Dendritic cell treated with granulocyte-macrophage colony-stimulating factor and Interleukin-4, amounts not matched to agents 40 ng/mL and 50 ng/mL, for 4 days (primary cell): ENCODE measurements at regions of chr4 and their contacts with region 1.

Region 1: DNA sequence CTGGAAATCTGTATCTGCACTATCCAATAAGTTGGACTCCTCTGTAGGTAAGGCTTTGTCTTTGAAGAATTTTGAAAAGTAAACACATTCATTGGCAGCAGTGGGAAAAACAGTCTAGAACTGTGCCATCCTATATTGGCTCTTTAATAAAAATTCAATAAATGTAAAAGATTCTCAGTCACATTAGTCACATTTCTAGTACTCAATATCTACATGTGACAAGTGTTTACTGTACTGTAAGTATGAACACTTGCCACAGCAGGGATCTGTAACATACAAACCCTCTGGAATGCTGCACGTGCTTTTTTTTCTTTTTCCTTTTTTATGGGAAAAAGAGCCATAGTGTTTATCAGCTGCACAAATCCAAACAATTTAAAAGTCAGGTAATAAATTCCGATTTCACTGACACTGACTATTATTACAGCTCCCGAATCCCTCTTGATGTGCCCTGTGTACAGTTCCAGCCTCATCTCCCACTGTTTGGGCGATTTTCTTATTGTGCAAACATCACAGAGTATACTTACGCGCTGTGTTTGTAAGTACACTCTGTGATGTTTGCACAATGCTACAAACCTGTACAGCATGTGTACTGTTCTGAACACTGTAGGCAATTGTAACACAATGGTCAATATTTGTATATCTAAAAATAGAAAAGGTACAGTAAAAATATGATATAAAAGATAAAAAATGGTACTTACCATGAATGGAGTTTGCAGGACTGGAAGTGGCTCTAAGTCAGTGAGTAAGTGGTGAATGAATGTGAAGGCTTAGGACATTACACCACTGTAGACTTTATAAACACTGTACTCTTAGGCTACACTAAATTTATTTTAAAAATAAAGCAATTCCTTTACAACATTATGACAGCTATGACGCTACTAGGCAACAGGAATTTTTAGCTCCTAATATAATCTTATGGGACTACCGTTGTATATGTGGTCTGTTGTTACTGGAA is 8.7 kb downstream of the PYURF start:
- H3K4me3 Mint-ChIP-seq: no peak overlapping the region
- H3K27ac Mint-ChIP-seq: no peak overlapping the region
- H3K4me1 Mint-ChIP-seq: no peaks in the 10 kb centered on the region
- H3K27me3 Mint-ChIP-seq: no peaks in the 10 kb centered on the region

Region 2: DNA sequence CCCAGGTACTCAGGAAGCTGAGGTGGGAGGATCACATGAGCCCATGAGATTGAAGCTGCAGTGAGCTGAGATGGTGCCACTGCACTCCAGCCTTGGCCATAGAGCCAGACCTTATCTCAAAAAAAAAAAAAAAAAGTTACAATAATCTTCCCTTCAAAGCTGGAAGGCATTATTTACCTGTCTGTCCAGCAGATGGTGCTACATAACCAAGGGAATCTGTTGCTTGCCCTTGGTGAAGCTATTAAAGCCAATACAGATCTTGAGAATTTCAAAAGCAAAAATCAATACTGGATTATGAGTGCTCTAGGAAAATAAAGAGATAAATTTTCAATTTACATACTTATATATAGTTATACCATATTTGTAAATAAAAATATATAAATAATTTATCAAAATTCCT is 481.5 kb before region 1 on chr4:
- intact Hi-C with region 1: loop called (anchors 10 kb)
- H3K4me3 Mint-ChIP-seq: no peak overlapping the region
- H3K27ac Mint-ChIP-seq: no peak overlapping the region
- H3K4me1 Mint-ChIP-seq: peaks cover 35% of the 10 kb centered on the region
- H3K27me3 Mint-ChIP-seq: no peaks in the 10 kb centered on the region

Region 3: GRCh38 chr4:88366460-88366859 is 148.4 kb before region 1 on chr4:
- intact Hi-C with region 1: loop called (anchors 2 kb)
- H3K4me3 Mint-ChIP-seq: no peak overlapping the region
- H3K27ac Mint-ChIP-seq: no peak overlapping the region
- H3K4me1 Mint-ChIP-seq: peaks cover 6% of the 10 kb centered on the region
- H3K27me3 Mint-ChIP-seq: no peaks in the 10 kb centered on the region

Region 4: GRCh38 chr4:88456757-88457306 is 58.0 kb before region 1 on chr4 and contains the start of gene HERC5:
- intact Hi-C with region 1: loop called (anchors 2 kb)
- H3K4me3 Mint-ChIP-seq: peak within 1 kb of the TSS; percentile 96
- H3K27ac Mint-ChIP-seq: peak within 1 kb of the TSS; percentile 89
- H3K4me1 Mint-ChIP-seq: peaks cover 13% of the 10 kb centered on the region
- H3K27me3 Mint-ChIP-seq: peaks cover 5% of the 10 kb centered on the region

Region 5: DNA sequence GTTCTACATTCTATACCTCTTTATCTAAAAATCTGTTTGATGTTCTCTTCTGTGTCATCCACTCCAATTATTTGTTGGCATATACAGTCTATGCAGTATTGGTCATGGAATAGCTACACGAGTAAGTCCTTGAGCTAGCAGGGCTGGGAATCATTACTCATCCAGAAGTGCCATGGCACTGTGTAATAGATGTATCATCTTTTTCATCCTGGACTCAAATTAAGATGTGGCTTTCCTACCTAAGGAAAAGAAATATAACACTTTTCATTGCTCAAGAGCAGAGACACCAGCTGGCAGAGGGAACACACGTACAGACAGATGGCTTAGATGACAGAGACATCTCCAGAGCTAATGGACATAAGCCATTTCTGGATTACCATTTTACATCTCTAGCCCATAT is 382.3 kb after region 1 on chr4:
- intact Hi-C with region 1: no loop called
- H3K4me3 Mint-ChIP-seq: no peak overlapping the region
- H3K27ac Mint-ChIP-seq: no peak overlapping the region
- H3K4me1 Mint-ChIP-seq: peaks cover 10% of the 10 kb centered on the region
- H3K27me3 Mint-ChIP-seq: no peaks in the 10 kb centered on the region